ENCODE measurements at regions of chr11 and their contacts with region 1.

Region 1: GRCh38 chr11:44621140-44621681 is 55.7 kb downstream of the CD82 start:
- DNase-seq: peak; percentile 55
- H3K4me3 Mint-ChIP-seq: no peak overlapping the region
- H3K27ac Mint-ChIP-seq: no peak overlapping the region
- H3K4me1 Mint-ChIP-seq: peaks cover 24% of the 10 kb centered on the region
- H3K27me3 Mint-ChIP-seq: no peaks in the 10 kb centered on the region

Region 2: DNA sequence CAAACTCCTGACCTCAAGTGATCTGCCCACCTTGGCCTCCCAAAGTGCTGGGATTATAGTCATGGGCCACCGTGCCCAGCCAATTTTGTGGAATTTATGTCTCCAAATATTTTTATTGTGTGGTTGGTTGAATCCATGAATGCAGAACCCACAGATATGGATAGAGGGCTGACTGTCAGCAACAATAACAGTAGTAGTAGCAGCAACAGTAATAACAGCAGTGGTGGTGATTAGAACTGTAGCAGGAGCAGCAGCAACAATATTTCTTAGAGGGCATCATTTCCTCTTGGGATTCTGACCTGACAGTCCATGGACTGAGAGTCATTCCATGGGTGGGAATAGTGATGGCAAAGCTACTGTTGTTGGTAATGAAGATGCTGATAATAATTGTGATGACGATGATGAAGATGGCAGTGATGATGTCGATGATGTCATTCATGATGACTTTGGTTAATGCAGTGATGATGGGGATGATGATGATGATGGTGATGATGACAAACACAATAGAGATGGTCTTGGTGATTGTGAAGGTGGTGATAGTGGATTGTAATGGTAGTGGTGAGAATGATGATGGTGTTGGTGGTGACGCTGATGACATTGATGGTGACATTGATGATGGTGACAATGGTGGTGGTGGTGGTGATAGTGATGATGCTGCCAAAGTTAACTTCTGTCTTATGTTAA is 69.6 kb before region 1 on chr11:
- CTCF ChIA-PET with region 1: interaction called, 45 read pairs
- POLR2A ChIA-PET with region 1: interaction called, 9 read pairs
- DNase-seq: no peak
- H3K4me3 Mint-ChIP-seq: no peak overlapping the region
- H3K27ac Mint-ChIP-seq: no peak overlapping the region
- H3K4me1 Mint-ChIP-seq: peaks cover under 1% of the 10 kb centered on the region
- H3K27me3 Mint-ChIP-seq: peaks cover 3% of the 10 kb centered on the region

Region 3: GRCh38 chr11:44556735-44557409 is 64.3 kb before region 1 on chr11:
- CTCF ChIA-PET with region 1: interaction called, 45 read pairs
- POLR2A ChIA-PET with region 1: interaction called, 9 read pairs
- DNase-seq: peak; percentile 75
- H3K4me3 Mint-ChIP-seq: no peak overlapping the region
- H3K27ac Mint-ChIP-seq: no peak overlapping the region
- H3K4me1 Mint-ChIP-seq: peaks cover 37% of the 10 kb centered on the region
- H3K27me3 Mint-ChIP-seq: peaks cover under 1% of the 10 kb centered on the region

Region 4: DNA sequence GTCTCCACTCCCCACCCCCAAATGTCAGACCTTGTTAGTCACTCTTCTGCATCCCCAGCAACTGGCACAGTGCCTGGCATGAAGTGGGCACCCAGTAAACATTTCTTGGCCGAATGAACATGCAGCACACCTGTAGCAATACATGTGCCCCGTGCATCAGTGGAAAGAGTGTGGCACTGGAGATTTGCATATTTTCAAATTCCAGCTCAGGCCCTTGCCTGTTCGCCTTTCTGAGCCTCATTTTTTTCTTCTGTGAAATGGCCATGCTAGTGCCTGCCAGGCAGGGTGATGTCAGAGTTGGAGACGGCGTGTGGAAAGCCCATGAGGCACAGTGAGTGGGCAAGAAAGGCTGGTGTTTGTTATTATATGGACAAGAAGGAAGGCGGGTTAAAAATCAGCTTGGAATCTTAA is 17.0 kb before region 1 on chr11:
- CTCF ChIA-PET with region 1: interaction called, 14 read pairs
- POLR2A ChIA-PET with region 1: no interaction called
- DNase-seq: no peak
- H3K4me3 Mint-ChIP-seq: no peak overlapping the region
- H3K27ac Mint-ChIP-seq: peak overlapping the region; percentile 58
- H3K4me1 Mint-ChIP-seq: peaks cover 39% of the 10 kb centered on the region
- H3K27me3 Mint-ChIP-seq: no peaks in the 10 kb centered on the region